ENCODE measurements at regions of chrX and their contacts with region 1.

Region 1: DNA sequence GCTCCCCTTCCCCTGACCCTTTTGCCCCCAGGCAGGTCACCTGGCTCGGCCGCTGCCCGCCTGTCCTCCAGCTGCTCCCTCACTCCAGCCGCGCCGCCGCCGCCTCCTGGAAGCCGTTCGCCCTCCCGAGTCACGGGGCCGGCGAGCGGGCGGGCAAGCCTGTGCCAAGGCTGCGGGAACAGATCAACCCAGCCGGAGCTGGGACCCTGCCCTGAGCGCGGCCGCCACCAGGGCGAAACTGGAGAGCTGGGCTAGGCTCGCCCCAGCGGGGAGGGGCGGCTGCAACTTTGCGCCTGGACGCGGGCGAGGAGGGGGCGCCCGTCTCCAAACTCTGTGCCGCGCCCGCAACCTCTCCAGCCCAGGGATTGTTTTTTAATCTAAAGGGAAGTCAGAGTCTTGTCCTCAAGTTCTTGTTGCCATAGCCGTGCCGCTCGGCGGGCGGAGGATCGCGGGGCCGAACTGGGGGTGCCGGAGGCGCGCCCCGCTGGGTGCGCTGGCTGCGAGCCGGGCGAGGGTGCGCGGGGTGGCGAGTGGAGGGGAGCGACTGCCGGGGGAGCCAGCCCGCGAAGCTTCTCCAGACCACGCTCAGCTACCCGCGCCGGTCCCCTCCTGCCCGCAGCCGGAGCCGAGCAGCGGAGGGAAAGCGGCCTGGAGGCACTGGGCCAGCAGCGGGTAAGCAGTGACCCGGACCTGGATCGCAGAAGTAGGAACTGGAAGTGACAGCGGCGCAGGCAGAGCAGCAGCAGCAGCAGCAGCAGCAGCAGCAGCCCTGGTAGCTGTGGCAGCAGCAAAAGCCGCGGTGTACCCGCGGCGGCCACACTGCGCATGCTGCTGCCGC is 13.4 kb downstream of the ARHGEF6 start:
- DNase-seq: peak; percentile 7 to 65 (median 32)
- ATAC-seq: peak; percentile 73 to 77
- H3K4me3 Mint-ChIP-seq: peak overlapping the region; percentile 72 to 88 (median 82)
- H3K27ac Mint-ChIP-seq: peak overlapping the region in 9 of 10 donors; percentile 83 to 93 (median 87)
- H3K4me1 Mint-ChIP-seq: peaks cover 19 to 77% (median 65%) of the 10 kb centered on the region in 4 donors
- H3K27me3 Mint-ChIP-seq: no peaks in the 10 kb centered on the region

Region 2: DNA sequence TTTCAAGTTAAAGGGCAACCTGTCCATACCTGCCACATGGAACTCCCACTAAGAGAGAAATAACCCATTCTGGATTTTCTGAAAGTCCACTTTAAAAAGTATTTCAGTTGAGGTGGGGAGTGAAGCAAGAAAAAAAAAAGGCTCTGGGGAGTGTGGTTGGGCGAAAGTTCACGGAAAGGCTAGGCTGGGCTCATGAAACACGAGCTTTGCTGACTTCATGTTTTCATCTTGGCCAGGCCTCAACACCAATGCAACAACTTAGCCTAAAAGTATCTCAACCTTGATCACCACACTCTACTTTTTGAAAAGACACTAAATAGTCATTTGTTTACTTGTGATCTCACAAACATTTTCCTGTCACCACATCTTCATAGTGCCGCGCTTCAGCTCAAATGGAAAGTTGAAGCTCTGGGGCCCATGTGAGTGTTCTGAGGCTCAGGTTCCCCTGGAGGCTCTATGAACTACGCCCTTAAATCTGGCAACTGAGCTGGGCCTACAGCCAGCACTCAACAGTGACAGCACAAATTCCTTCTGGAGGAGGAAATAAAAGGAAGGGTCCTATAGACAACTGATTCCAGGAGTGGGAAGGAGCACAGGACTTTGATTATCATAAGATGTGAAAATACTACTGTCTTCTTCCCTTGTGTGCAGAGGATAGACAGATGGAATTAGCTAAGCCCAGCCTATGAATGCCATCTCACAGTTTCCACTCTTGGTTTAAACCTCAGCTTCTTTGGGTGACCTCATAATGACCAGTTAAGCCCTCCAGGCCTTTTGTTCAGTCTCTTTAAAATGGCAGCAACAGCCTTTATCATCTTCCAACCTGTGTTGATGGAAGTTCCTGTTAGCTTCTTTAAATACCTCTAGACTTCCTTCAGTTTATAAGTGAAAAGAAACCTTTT is 114.2 kb before region 1 on chrX:
- POLR2A ChIA-PET with region 1: no interaction called
- DNase-seq: no peak
- ATAC-seq: no peak
- H3K4me3 Mint-ChIP-seq: peak overlapping the region in 1 of 10 donors; percentile 11
- H3K27ac Mint-ChIP-seq: peak overlapping the region in 2 of 10 donors; percentile 42 to 89
- H3K4me1 Mint-ChIP-seq: peaks cover 14 to 27% (median 22%) of the 10 kb centered on the region in 4 donors
- H3K27me3 Mint-ChIP-seq: no peaks in the 10 kb centered on the region

Region 3: GRCh38 chrX:136694431-136695087 is 72.8 kb before region 1 on chrX:
- POLR2A ChIA-PET with region 1: no interaction called
- DNase-seq: peak in 8 of 10 donors; percentile 23 to 64 (median 44)
- ATAC-seq: peak; percentile 74 to 80
- H3K4me3 Mint-ChIP-seq: peak overlapping the region; percentile 46 to 76 (median 69)
- H3K27ac Mint-ChIP-seq: peak overlapping the region; percentile 89 to 98 (median 97)
- H3K4me1 Mint-ChIP-seq: peaks cover 19 to 76% (median 55%) of the 10 kb centered on the region in 4 donors
- H3K27me3 Mint-ChIP-seq: no peaks in the 10 kb centered on the region

Region 4: DNA sequence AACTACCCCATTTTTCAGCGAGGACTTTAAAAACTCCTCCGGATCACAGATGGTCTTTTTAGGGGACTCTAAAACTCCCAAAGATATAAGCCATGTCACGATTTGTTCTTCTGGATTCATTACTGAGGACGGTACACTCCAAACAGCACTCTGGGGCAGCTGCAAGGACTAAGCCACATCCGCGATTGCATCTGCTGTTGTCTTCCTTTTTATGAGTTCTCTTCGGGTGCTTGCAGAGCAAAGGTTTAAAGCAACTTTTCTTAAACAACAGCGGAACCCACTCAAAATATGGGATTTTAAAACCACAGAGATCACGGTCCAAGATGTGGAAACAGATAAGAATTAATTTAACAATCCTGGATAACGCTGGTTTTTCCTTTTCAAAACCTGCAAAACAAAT is 13.4 kb after region 1 on chrX and contains the start of gene ARHGEF6:
- POLR2A ChIA-PET with region 1: interaction called, 23 read pairs
- DNase-seq: peak in 4 of 10 donors; percentile 10 to 48 (median 32)
- ATAC-seq: peak; percentile 75
- H3K4me3 Mint-ChIP-seq: peak within 1 kb of the TSS; percentile 89 to 96 (median 94)
- H3K27ac Mint-ChIP-seq: peak within 1 kb of the TSS; percentile 88 to 100 (median 94)
- H3K4me1 Mint-ChIP-seq: peaks cover 25 to 69% (median 60%) of the 10 kb centered on the region in 4 donors
- H3K27me3 Mint-ChIP-seq: no peaks in the 10 kb centered on the region
- polyA plus RNA-seq, gene ARHGEF6: 69.8 to 76.4 (median 75.4) TPM

Region 5: GRCh38 chrX:136847876-136848337 is 80.6 kb after region 1 on chrX:
- POLR2A ChIA-PET with region 1: no interaction called
- DNase-seq: no peak
- ATAC-seq: no peak
- H3K4me3 Mint-ChIP-seq: no peak overlapping the region
- H3K27ac Mint-ChIP-seq: no peak overlapping the region
- H3K4me1 Mint-ChIP-seq: peaks cover 0 to 2% (median under 1%) of the 10 kb centered on the region in 4 donors
- H3K27me3 Mint-ChIP-seq: no peaks in the 10 kb centered on the region